Common myeloid progenitor, CD34-positive (primary cell): ENCODE measurements at regions of chr18 and their contacts with region 1.

Region 1: DNA sequence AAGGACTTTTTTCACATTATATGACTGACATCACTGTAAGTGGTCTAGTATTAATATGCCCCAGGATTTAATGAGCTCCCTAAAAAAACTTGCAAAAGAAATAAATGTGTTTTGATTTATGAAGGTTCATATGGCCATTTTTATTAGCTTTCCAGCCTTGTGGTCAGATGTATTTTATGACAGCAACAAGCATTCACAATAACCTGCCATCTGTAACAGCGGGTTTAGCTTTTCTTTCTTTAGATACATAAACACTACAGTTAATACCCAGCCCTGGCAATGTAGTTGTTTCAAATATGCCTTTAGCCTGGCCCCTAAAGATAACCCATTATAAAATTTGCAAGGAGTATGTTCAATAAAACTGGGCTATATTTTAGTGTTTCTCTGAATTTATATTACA is 1063.8 kb downstream of the SOCS6 start:
- DNase-seq: no peak
- H3K4me3 ChIP-seq: no peak overlapping the region
- H3K27ac ChIP-seq: no peak overlapping the region
- H3K4me1 ChIP-seq: no peaks in the 10 kb centered on the region
- H3K27me3 ChIP-seq: no peaks in the 10 kb centered on the region

Region 2: GRCh38 chr18:71336576-71337210 is 15.9 kb before region 1 on chr18:
- CTCF ChIA-PET with region 1: no interaction called
- POLR2A ChIA-PET with region 1: no interaction called
- DNase-seq: no peak
- H3K4me3 ChIP-seq: no peak overlapping the region
- H3K27ac ChIP-seq: no peak overlapping the region
- H3K4me1 ChIP-seq: no peaks in the 10 kb centered on the region
- H3K27me3 ChIP-seq: no peaks in the 10 kb centered on the region

Region 3: GRCh38 chr18:71371951-71372605 is 19.5 kb after region 1 on chr18:
- CTCF ChIA-PET with region 1: interaction called, 3 read pairs
- POLR2A ChIA-PET with region 1: interaction called, 13 read pairs
- DNase-seq: no peak
- H3K4me3 ChIP-seq: no peak overlapping the region
- H3K27ac ChIP-seq: no peak overlapping the region
- H3K4me1 ChIP-seq: no peaks in the 10 kb centered on the region
- H3K27me3 ChIP-seq: no peaks in the 10 kb centered on the region